ENCODE measurements at regions of chrX and their contacts with region 1.

Region 1: GRCh38 chrX:96729868-96730643 is 45.4 kb downstream of the DIAPH2 start:
- DNase-seq: no peak
- H3K4me3 ChIP-seq: no peak overlapping the region
- H3K27me3 ChIP-seq: no peaks in the 10 kb centered on the region
- CTCF ChIP-seq: no peak

Region 2: GRCh38 chrX:96590403-96590802 is 139.7 kb before region 1 on chrX:
- CTCF ChIA-PET with region 1: no interaction called
- POLR2A ChIA-PET with region 1: no interaction called
- DNase-seq: no peak
- H3K4me3 ChIP-seq: no peak overlapping the region
- H3K27me3 ChIP-seq: no peaks in the 10 kb centered on the region
- CTCF ChIP-seq: no peak

Region 3: GRCh38 chrX:96752781-96753180 is 22.7 kb after region 1 on chrX:
- CTCF ChIA-PET with region 1: no interaction called
- POLR2A ChIA-PET with region 1: no interaction called
- DNase-seq: no peak
- H3K4me3 ChIP-seq: no peak overlapping the region
- H3K27me3 ChIP-seq: no peaks in the 10 kb centered on the region
- CTCF ChIP-seq: no peak

Region 4: GRCh38 chrX:96770315-96770714 is 40.3 kb after region 1 on chrX:
- CTCF ChIA-PET with region 1: no interaction called
- POLR2A ChIA-PET with region 1: interaction called, 20 read pairs
- DNase-seq: no peak
- H3K4me3 ChIP-seq: no peak overlapping the region
- H3K27me3 ChIP-seq: no peaks in the 10 kb centered on the region
- CTCF ChIP-seq: 0 out of 2 replicates have a peak, but pooled peaks have one; percentile 18

Region 5: GRCh38 chrX:96906741-96907140 is 176.7 kb after region 1 on chrX:
- CTCF ChIA-PET with region 1: no interaction called
- POLR2A ChIA-PET with region 1: no interaction called
- DNase-seq: no peak
- H3K4me3 ChIP-seq: no peak overlapping the region
- H3K27me3 ChIP-seq: no peaks in the 10 kb centered on the region
- CTCF ChIP-seq: no peak